CD4-positive, alpha-beta memory T cell (primary cell): ENCODE measurements at regions of chr9 and their contacts with region 1.

Region 1: DNA sequence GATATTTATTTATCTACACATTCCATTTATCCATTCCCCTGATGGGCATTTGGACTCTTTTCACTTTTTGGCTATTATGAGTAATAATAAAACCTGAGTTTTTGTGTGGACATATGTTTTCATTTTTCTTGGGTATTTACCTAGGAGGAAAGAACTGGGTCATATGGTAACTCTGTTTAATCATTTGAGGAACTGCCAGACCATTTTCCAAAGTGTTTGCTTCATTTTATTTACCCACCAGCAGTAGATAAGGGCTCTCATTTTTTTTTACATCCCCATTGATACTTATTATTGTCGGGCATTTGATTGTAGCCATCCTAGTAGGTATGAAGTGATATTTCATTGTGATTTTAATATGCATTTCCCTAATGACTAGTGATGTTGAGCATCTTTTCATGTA is 7.7 kb upstream of the PTPDC1 start:
- DNase-seq: no peak
- H3K4me3 ChIP-seq: no peak overlapping the region
- H3K4me3 Mint-ChIP-seq: no peak overlapping the region
- H3K27ac ChIP-seq: no peak overlapping the region
- H3K27ac Mint-ChIP-seq: no peak overlapping the region
- H3K4me1 ChIP-seq: no peaks in the 10 kb centered on the region
- H3K4me1 Mint-ChIP-seq: peaks cover 0 to 1% (median 0%) of the 10 kb centered on the region in 4 donors
- H3K27me3 ChIP-seq: no peaks in the 10 kb centered on the region
- H3K27me3 Mint-ChIP-seq: no peaks in the 10 kb centered on the region

Region 2: GRCh38 chr9:93930070-93930469 is 146.5 kb before region 1 on chr9:
- CTCF ChIA-PET with region 1: no interaction called
- POLR2A ChIA-PET with region 1: no interaction called
- intact Hi-C with region 1: no loop called
- DNase-seq: no peak
- H3K4me3 ChIP-seq: no peak overlapping the region
- H3K4me3 Mint-ChIP-seq: no peak overlapping the region
- H3K27ac ChIP-seq: no peak overlapping the region
- H3K27ac Mint-ChIP-seq: no peak overlapping the region
- H3K4me1 ChIP-seq: no peaks in the 10 kb centered on the region
- H3K4me1 Mint-ChIP-seq: no peaks in the 10 kb centered on the region
- H3K27me3 ChIP-seq: no peaks in the 10 kb centered on the region
- H3K27me3 Mint-ChIP-seq: peaks cover 14 to 16% of the 10 kb centered on the region in 2 donors

Region 3: DNA sequence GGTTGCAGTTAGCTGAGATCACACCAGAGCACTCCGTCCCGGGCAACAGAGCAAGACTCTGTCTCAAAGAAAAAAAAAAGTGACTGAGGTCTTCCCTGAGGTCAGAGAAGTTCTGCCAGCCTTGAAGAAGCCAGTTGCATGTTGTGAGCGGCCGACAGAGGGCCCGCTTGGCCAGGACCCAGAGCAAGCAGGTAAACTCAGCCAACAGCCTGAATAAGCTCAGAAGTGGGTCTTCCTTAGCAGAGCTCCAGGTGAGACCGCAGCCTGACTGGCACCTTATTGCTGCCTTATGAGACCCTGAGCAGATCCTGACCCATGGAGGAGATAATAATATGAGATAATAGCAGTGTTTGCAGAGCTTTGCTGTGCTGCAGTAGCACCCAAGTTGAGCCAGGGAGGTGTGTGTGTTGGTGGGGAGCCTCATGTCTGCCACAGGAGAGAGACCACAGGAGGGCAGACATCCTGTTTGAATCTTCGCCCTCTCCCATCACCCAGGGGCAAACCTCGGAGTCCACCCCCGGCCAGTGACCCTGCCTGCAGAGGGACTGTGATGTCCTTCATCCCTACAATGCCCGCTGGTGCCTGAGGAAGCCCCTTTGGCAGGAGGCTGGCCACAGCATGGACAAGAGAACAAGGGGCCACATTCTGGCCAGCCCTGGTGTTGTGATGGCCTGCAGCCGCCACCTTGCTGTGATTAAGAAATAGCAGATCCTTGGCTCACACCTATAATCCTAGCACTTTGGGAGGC is 110.6 kb before region 1 on chr9:
- CTCF ChIA-PET with region 1: no interaction called
- POLR2A ChIA-PET with region 1: no interaction called
- intact Hi-C with region 1: no loop called
- DNase-seq: no peak
- H3K4me3 ChIP-seq: no peak overlapping the region
- H3K4me3 Mint-ChIP-seq: no peak overlapping the region
- H3K27ac ChIP-seq: no peak overlapping the region
- H3K27ac Mint-ChIP-seq: no peak overlapping the region
- H3K4me1 ChIP-seq: peaks cover 10% of the 10 kb centered on the region
- H3K4me1 Mint-ChIP-seq: peaks cover 6 to 20% (median 8%) of the 10 kb centered on the region in 4 donors
- H3K27me3 ChIP-seq: no peaks in the 10 kb centered on the region
- H3K27me3 Mint-ChIP-seq: peaks cover 16 to 32% of the 10 kb centered on the region in 2 donors

Region 4: GRCh38 chr9:94065535-94065961 is 11.0 kb before region 1 on chr9:
- CTCF ChIA-PET with region 1: interaction called, 19 read pairs
- POLR2A ChIA-PET with region 1: no interaction called
- intact Hi-C with region 1: no loop called
- DNase-seq: peak; percentile 58 to 65 (median 63)
- H3K4me3 ChIP-seq: no peak overlapping the region
- H3K4me3 Mint-ChIP-seq: no peak overlapping the region
- H3K27ac ChIP-seq: no peak overlapping the region
- H3K27ac Mint-ChIP-seq: peak overlapping the region in 1 of 7 donors; percentile 18
- H3K4me1 ChIP-seq: no peaks in the 10 kb centered on the region
- H3K4me1 Mint-ChIP-seq: peaks cover 0 to 4% (median under 1%) of the 10 kb centered on the region in 4 donors
- H3K27me3 ChIP-seq: no peaks in the 10 kb centered on the region
- H3K27me3 Mint-ChIP-seq: no peaks in the 10 kb centered on the region

Region 5: GRCh38 chr9:94086486-94087345 is 10.2 kb after region 1 on chr9:
- CTCF ChIA-PET with region 1: no interaction called
- POLR2A ChIA-PET with region 1: no interaction called
- intact Hi-C with region 1: no loop called
- DNase-seq: no peak
- H3K4me3 ChIP-seq: no peak overlapping the region
- H3K4me3 Mint-ChIP-seq: no peak overlapping the region
- H3K27ac ChIP-seq: no peak overlapping the region
- H3K27ac Mint-ChIP-seq: peak overlapping the region in 1 of 7 donors; percentile 15
- H3K4me1 ChIP-seq: no peaks in the 10 kb centered on the region
- H3K4me1 Mint-ChIP-seq: no peaks in the 10 kb centered on the region
- H3K27me3 ChIP-seq: no peaks in the 10 kb centered on the region
- H3K27me3 Mint-ChIP-seq: no peaks in the 10 kb centered on the region